PC-9 (cell line): ENCODE measurements at regions of chr3 and their contacts with region 1.

Region 1: GRCh38 chr3:9179826-9180763 is 69.4 kb downstream of the SRGAP3 start:
- DNase-seq: no peak
- H3K4me3 ChIP-seq: no peak overlapping the region
- H3K27ac ChIP-seq: no peak overlapping the region
- H3K4me1 ChIP-seq: peaks cover 3% of the 10 kb centered on the region
- H3K27me3 ChIP-seq: no peaks in the 10 kb centered on the region
- CTCF ChIP-seq: no peak

Region 2: DNA sequence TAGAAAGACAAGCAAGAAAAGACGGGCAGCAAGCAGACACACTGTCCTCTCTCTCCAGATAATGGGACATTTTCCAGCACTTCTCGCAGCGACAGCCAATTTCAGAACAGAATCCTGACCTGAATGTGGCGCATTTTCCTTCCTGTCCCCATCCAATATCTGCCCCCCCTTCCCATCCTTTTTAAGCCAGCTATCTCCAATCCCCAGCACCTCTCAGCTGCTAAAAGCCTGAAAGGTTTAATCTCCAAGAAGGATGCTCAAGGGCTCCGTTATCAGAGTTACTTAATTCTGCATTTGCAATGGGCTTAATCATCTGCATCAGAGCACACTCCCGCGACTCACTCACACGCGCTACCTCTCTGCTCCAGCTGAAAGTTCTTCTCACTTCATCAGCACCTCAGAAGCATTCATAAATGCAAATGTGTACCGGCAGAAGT is 18.8 kb after region 1 on chr3:
- CTCF ChIA-PET with region 1: no interaction called
- POLR2A ChIA-PET with region 1: no interaction called
- intact Hi-C with region 1: loop called (anchors 1 kb)
- DNase-seq: no peak
- H3K4me3 ChIP-seq: no peak overlapping the region
- H3K27ac ChIP-seq: no peak overlapping the region
- H3K4me1 ChIP-seq: no peaks in the 10 kb centered on the region
- H3K27me3 ChIP-seq: 0 out of 2 replicates have a peak, but pooled peaks cover 3% of the 10 kb centered on the region
- CTCF ChIP-seq: no peak

Region 3: DNA sequence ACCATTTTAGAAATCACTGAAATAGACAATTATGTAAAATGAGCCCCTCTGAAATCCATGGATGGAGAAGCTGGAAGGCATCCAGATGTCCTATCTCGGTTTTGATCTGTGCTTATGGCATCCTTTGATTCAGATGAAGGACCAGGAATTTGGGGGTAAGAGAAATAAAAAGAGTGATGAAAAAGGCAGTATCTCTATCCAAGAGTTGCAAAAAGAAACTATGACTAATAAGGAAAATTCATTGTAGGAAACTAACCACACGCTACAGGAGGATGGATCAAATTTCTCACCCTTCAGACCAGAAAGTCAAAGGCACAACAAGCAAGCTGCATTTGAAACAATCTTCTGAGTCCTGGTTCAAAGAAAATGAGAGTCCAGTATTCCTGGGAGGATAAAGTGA is 34.5 kb after region 1 on chr3:
- CTCF ChIA-PET with region 1: no interaction called
- POLR2A ChIA-PET with region 1: no interaction called
- intact Hi-C with region 1: loop called (anchors 1 kb)
- DNase-seq: peak; percentile 12 to 74
- H3K4me3 ChIP-seq: no peak overlapping the region
- H3K27ac ChIP-seq: peak overlapping the region; percentile 64
- H3K4me1 ChIP-seq: peaks cover 14% of the 10 kb centered on the region
- H3K27me3 ChIP-seq: no peaks in the 10 kb centered on the region
- CTCF ChIP-seq: no peak

Region 4: GRCh38 chr3:9229325-9229724 is 49.2 kb after region 1 on chr3:
- CTCF ChIA-PET with region 1: no interaction called
- POLR2A ChIA-PET with region 1: no interaction called
- intact Hi-C with region 1: loop called (anchors 2 kb)
- DNase-seq: peak in 1 of 2 experiments; percentile 50
- H3K4me3 ChIP-seq: no peak overlapping the region
- H3K27ac ChIP-seq: no peak overlapping the region
- H3K4me1 ChIP-seq: no peaks in the 10 kb centered on the region
- H3K27me3 ChIP-seq: no peaks in the 10 kb centered on the region
- CTCF ChIP-seq: no peak

Region 5: GRCh38 chr3:9249273-9250192 is 69.4 kb after region 1 on chr3 and contains the start of gene SRGAP3:
- CTCF ChIA-PET with region 1: interaction called, 3 read pairs
- POLR2A ChIA-PET with region 1: interaction called, 3 read pairs
- intact Hi-C with region 1: loop called (anchors 2 kb)
- DNase-seq: peak; percentile 80 to 88
- H3K4me3 ChIP-seq: peak within 1 kb of the TSS; percentile 62
- H3K27ac ChIP-seq: no peak within 1 kb of the TSS
- H3K4me1 ChIP-seq: peaks cover 30% of the 10 kb centered on the region
- H3K27me3 ChIP-seq: no peaks in the 10 kb centered on the region
- CTCF ChIP-seq: 0 out of 2 replicates have a peak, but pooled peaks have one; percentile 27
- total RNA-seq, gene SRGAP3: 12.9 and 17.5 TPM in 2 replicates

Region 6: GRCh38 chr3:9627901-9628633 is 448.0 kb after region 1 on chr3:
- CTCF ChIA-PET with region 1: no interaction called
- POLR2A ChIA-PET with region 1: no interaction called
- intact Hi-C with region 1: no loop called
- DNase-seq: no peak
- H3K4me3 ChIP-seq: no peak overlapping the region
- H3K27ac ChIP-seq: no peak overlapping the region
- H3K4me1 ChIP-seq: no peaks in the 10 kb centered on the region
- H3K27me3 ChIP-seq: no peaks in the 10 kb centered on the region
- CTCF ChIP-seq: no peak